Gastrocnemius medialis (tissue), 4 donors: ENCODE measurements at regions of chr5 and their contacts with region 1.

Region 1: DNA sequence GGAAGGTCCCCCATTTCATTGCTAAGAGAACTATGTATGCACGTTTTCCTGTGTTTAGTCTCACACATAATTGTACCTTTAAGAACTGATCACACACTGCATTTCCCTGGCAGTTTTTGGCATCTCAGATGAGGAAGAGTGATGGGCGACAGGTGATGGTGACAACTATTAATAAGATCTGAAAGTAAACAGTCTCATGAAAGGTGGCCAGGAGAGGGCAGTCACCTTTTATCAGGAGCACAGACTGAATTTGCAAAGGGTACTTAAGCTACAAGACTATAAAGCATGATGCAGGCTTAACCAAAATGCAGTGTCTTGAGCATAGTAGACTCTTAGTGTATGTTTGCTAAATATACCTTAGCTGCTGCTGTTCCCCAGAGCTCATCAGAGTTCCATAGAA is 91.5 kb downstream of the GHR start:
- DNase-seq: peak; percentile 76 to 86
- ATAC-seq: peak; percentile 53 to 70
- H3K4me3 ChIP-seq: no peak overlapping the region
- H3K27ac ChIP-seq: peak overlapping the region; percentile 83 to 91 (median 84)
- H3K4me1 ChIP-seq: peaks cover 70% of the 10 kb centered on the region in 2 donors
- H3K27me3 ChIP-seq: no peaks in the 10 kb centered on the region
- CTCF ChIP-seq: peak; percentile 45 to 58 (median 52)
- POLR2A ChIP-seq: no peak

Region 2: DNA sequence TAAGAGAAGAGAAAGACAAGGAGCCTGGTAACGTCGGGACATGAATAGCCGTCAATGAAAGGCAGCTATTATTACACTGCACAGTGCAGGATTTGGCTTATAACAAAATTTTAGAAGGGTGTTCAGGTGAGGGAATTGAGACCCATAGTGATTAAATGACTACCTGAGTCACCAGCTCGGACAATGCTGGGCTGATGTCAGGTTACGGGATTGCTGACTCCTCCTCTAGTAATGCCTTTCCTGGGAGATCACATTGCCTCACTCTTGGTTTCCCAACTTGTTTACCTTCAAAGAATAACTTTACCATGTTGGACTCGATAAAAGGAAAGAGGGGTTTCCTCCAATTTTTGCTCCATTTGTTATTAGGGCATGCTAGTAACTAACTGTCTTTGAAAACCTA is 41.0 kb after region 1 on chr5:
- in situ Hi-C with region 1: no loop called
- intact Hi-C with region 1: loop called (anchors 2 kb)
- DNase-seq: peak; percentile 71 to 73
- ATAC-seq: peak; percentile 84 to 86
- H3K4me3 ChIP-seq: peak overlapping the region in 1 of 4 donors; percentile 3
- H3K27ac ChIP-seq: peak overlapping the region; percentile 82 to 89 (median 88)
- H3K4me1 ChIP-seq: peaks cover 42 to 46% of the 10 kb centered on the region in 2 donors
- H3K27me3 ChIP-seq: no peaks in the 10 kb centered on the region
- CTCF ChIP-seq: no peak
- POLR2A ChIP-seq: peak in 1 of 2 donors; percentile 27

Region 3: DNA sequence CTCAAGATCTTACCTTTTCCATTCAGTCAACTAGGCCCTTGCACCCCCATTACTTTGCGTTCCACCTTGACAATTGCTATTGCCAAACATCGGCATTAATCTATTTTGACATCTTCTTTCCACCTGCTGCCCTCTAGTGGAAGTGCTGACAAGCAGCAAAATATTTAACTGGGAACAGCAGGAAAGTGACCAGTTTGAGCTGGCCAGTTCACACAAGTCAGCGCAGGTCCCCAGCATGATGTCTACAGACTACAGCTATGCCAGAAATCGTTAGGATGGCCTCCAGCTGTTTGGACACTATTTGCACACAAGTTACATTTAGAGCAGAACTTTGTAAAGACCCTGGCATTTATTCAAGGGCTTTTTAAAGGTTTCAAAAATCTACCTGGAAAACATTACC is 68.6 kb after region 1 on chr5:
- in situ Hi-C with region 1: loop called in 1 of 4 experiments (anchors 10 kb)
- intact Hi-C with region 1: loop called (anchors 2 kb)
- DNase-seq: peak; percentile 53 to 70
- ATAC-seq: peak; percentile 23 to 45
- H3K4me3 ChIP-seq: no peak overlapping the region
- H3K27ac ChIP-seq: peak overlapping the region; percentile 78 to 84 (median 80)
- H3K4me1 ChIP-seq: peaks cover 61 to 63% of the 10 kb centered on the region in 2 donors
- H3K27me3 ChIP-seq: no peaks in the 10 kb centered on the region
- CTCF ChIP-seq: peak; percentile 79 to 87 (median 83)
- POLR2A ChIP-seq: no peak

Region 4: DNA sequence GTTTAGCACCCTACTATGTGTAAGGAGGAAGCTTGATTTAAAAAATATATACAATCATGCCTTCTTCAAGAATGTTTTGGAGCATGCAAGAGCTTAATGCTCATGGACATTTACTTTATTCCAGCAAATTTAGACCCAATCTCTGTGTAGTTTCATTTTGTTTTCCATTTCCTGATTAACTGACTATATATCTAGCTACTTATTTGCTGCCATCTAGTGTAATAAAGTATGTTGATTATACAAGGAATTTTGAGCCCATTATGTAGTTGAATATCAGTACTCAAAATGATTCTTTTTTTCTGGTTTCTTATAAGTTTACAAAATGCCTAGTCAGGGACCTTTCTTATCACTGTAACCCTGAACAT is 141.9 kb after region 1 on chr5:
- in situ Hi-C with region 1: no loop called
- intact Hi-C with region 1: loop called (anchors 5 kb)
- DNase-seq: no peak
- ATAC-seq: no peak
- H3K4me3 ChIP-seq: peak overlapping the region in 1 of 4 donors; percentile 24
- H3K27ac ChIP-seq: peak overlapping the region in 1 of 4 donors; percentile 10
- H3K4me1 ChIP-seq: peaks cover 40 to 42% of the 10 kb centered on the region in 2 donors
- H3K27me3 ChIP-seq: no peaks in the 10 kb centered on the region
- CTCF ChIP-seq: peak in 2 of 5 experiments; percentile 10 to 33
- POLR2A ChIP-seq: no peak